Activated CD4-positive, alpha-beta memory T cell treated with anti-CD3 and anti-CD28 coated beads, Interleukin-2, amount 10 ng/mL, durations not matched to agents 7 days and 5 days (primary cell): ENCODE measurements at regions of chr2 and their contacts with region 1.

Region 1: DNA sequence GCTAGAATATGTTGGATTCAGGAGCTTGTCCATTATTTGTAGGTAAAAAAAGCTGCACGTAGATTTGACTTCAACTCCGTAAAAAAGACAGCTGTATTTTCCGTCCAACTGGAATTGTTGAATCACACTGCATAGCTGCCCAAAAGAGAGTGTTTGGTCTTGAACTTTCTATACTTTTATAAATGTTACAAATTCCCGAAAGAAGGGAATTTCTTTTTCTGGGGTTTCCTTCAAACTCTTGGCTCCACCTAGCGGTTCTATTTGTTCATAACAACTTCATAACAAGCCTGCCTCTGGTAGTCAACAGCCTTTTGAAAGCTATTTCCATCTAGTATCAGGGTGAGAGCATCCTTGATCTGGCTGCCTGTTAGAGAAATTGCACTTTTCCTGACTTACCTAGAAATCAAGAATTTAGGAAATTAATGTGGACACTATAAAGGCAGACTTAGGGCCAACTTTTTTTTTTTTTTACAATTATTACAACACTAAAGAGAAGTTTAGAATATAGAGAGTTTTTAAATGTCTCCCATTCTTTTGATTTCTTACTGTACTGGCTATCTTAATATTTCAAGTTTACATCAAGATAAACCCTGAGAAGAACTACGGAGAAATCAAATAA is 48.1 kb downstream of the TMEM185B start:
- DNase-seq: no peak
- H3K4me3 Mint-ChIP-seq: no peak overlapping the region
- H3K27ac Mint-ChIP-seq: peak overlapping the region; percentile 28
- H3K4me1 Mint-ChIP-seq: peaks cover 48% of the 10 kb centered on the region
- H3K27me3 Mint-ChIP-seq: no peaks in the 10 kb centered on the region

Region 2: GRCh38 chr2:119678998-119679710 is 495.9 kb before region 1 on chr2 and contains the start of gene TMEM177:
- CTCF ChIA-PET with region 1: interaction called, 15 read pairs
- POLR2A ChIA-PET with region 1: interaction called, 16 read pairs
- DNase-seq: peak; percentile 91
- H3K4me3 Mint-ChIP-seq: peak within 1 kb of the TSS; percentile 81
- H3K27ac Mint-ChIP-seq: peak within 1 kb of the TSS; percentile 77
- H3K4me1 Mint-ChIP-seq: peaks cover 24% of the 10 kb centered on the region
- H3K27me3 Mint-ChIP-seq: peaks cover 8% of the 10 kb centered on the region
- total RNA-seq, gene TMEM177: 8.3 to 8.5 TPM

Region 3: GRCh38 chr2:119759451-119760236 is 415.4 kb before region 1 on chr2 and contains the start of gene PTPN4:
- CTCF ChIA-PET with region 1: interaction called, 59 read pairs
- POLR2A ChIA-PET with region 1: interaction called, 14 read pairs
- DNase-seq: peak; percentile 98
- H3K4me3 Mint-ChIP-seq: peak within 1 kb of the TSS; percentile 93
- H3K27ac Mint-ChIP-seq: peak within 1 kb of the TSS; percentile 91
- H3K4me1 Mint-ChIP-seq: peaks cover 40% of the 10 kb centered on the region
- H3K27me3 Mint-ChIP-seq: peaks cover under 1% of the 10 kb centered on the region
- total RNA-seq, gene PTPN4: 78.7 to 84.5 TPM

Region 4: GRCh38 chr2:120161190-120161589 is 13.9 kb before region 1 on chr2:
- CTCF ChIA-PET with region 1: interaction called, 20 read pairs
- POLR2A ChIA-PET with region 1: interaction called, 3 read pairs
- DNase-seq: no peak
- H3K4me3 Mint-ChIP-seq: no peak overlapping the region
- H3K27ac Mint-ChIP-seq: no peak overlapping the region
- H3K4me1 Mint-ChIP-seq: no peaks in the 10 kb centered on the region
- H3K27me3 Mint-ChIP-seq: peaks cover 1% of the 10 kb centered on the region

Region 5: DNA sequence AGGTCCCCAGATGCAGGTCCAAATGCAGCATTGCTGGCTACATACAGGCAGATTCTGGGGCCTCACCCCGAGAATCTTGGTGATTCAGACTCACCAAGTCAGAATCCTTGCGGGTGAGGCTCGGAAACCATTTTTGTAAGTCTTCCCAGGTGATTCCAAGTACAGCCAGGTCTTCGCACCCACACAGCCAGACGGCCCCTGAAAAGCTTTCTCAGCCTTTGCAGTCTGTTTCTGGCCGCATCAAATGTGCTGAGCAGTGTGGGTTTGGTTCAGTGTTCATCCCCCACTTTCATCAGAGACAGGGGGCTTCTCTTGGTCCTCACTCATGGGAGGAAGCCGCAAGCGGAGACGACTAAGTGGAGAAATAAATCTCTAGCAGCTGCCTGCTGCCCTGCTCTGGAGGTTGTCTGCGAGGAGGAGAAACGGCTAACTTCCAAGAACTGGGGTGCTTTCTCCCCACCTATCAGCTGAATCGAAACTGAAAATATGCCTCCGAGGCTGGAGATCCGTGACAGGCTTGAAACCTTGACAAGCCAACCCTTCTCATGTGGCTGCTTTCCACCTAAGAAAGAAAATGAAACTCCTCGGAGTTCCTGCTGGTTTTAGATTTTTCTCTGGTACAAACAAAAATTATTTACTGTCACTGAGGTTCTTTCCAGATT is 57.0 kb after region 1 on chr2:
- CTCF ChIA-PET with region 1: interaction called, 6 read pairs
- POLR2A ChIA-PET with region 1: interaction called, 33 read pairs
- DNase-seq: peak; percentile 84
- H3K4me3 Mint-ChIP-seq: peak overlapping the region; percentile 96
- H3K27ac Mint-ChIP-seq: peak overlapping the region; percentile 99
- H3K4me1 Mint-ChIP-seq: peaks cover 57% of the 10 kb centered on the region
- H3K27me3 Mint-ChIP-seq: no peaks in the 10 kb centered on the region

Region 6: GRCh38 chr2:120265006-120265405 is 89.9 kb after region 1 on chr2:
- CTCF ChIA-PET with region 1: no interaction called
- POLR2A ChIA-PET with region 1: no interaction called
- DNase-seq: no peak
- H3K4me3 Mint-ChIP-seq: no peak overlapping the region
- H3K27ac Mint-ChIP-seq: no peak overlapping the region
- H3K4me1 Mint-ChIP-seq: peaks cover 15% of the 10 kb centered on the region
- H3K27me3 Mint-ChIP-seq: no peaks in the 10 kb centered on the region

Region 7: GRCh38 chr2:120384486-120385354 is 209.6 kb after region 1 on chr2:
- CTCF ChIA-PET with region 1: no interaction called
- POLR2A ChIA-PET with region 1: no interaction called
- DNase-seq: no peak
- H3K4me3 Mint-ChIP-seq: no peak overlapping the region
- H3K27ac Mint-ChIP-seq: no peak overlapping the region
- H3K4me1 Mint-ChIP-seq: no peaks in the 10 kb centered on the region
- H3K27me3 Mint-ChIP-seq: no peaks in the 10 kb centered on the region